ENCODE measurements at regions of chr4 and their contacts with region 1.

Region 1: GRCh38 chr4:120156120-120156718 is 89.6 kb upstream of the MAD2L1 start:
- DNase-seq: no peak
- H3K4me3 Mint-ChIP-seq: no peak overlapping the region
- H3K27ac Mint-ChIP-seq: no peak overlapping the region
- H3K4me1 Mint-ChIP-seq: no peaks in the 10 kb centered on the region
- H3K27me3 Mint-ChIP-seq: no peaks in the 10 kb centered on the region

Region 2: DNA sequence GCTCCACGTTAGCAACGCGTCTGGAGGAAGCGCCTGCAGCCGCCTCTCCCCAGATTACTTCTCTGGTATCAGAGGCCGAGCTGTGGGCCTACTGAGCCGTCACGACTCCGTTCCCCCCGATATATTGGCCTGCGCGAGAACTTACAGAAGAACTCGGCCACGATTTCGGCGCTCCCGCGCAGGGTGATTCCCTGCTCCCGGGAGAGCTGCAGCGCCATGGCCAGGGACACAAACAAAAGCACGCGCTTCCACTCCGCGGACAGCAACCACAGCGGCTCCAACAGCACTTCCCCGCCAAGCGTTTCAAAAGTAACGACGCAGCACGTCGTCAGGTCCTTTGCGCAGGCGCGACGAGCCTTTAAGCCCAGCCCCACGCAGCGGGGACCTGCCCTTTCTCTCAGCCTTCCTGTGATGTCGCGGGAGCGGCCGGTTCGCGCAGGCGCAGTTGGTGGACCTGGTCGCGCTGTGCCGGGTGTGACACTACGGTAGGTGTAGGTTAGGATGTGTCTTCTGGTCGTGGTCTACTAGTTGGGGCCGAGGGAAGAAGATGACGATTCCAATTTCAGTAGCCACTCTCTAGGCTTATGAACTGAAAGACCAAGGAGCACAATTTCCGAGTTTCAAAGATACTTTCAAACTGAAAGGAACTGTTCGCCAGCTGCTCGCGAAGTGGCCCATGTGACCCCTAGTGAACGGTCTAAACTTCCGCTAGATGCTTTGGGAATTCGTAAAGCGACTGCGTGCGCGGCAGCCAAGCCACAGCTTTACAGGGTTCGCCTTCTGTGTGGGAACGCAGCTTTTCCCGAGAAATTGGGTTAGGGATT is 89.5 kb before region 1 on chr4 and contains the start of gene MAD2L1:
- CTCF ChIA-PET with region 1: no interaction called
- POLR2A ChIA-PET with region 1: no interaction called
- intact Hi-C with region 1: loop called (anchors 1 kb)
- DNase-seq: peak; percentile 99
- H3K4me3 Mint-ChIP-seq: peak within 1 kb of the TSS; percentile 98
- H3K27ac Mint-ChIP-seq: peak within 1 kb of the TSS; percentile 99
- H3K4me1 Mint-ChIP-seq: peaks cover 58% of the 10 kb centered on the region
- H3K27me3 Mint-ChIP-seq: no peaks in the 10 kb centered on the region
- total RNA-seq, gene MAD2L1: 92.0 to 96.6 TPM

Region 3: GRCh38 chr4:120517966-120518365 is 361.7 kb after region 1 on chr4:
- CTCF ChIA-PET with region 1: no interaction called
- POLR2A ChIA-PET with region 1: no interaction called
- intact Hi-C with region 1: no loop called
- DNase-seq: no peak
- H3K4me3 Mint-ChIP-seq: no peak overlapping the region
- H3K27ac Mint-ChIP-seq: no peak overlapping the region
- H3K4me1 Mint-ChIP-seq: no peaks in the 10 kb centered on the region
- H3K27me3 Mint-ChIP-seq: no peaks in the 10 kb centered on the region

Region 4: GRCh38 chr4:120633810-120634209 is 477.6 kb after region 1 on chr4:
- CTCF ChIA-PET with region 1: no interaction called
- POLR2A ChIA-PET with region 1: no interaction called
- intact Hi-C with region 1: no loop called
- DNase-seq: no peak
- H3K4me3 Mint-ChIP-seq: no peak overlapping the region
- H3K27ac Mint-ChIP-seq: no peak overlapping the region
- H3K4me1 Mint-ChIP-seq: peaks cover 3% of the 10 kb centered on the region
- H3K27me3 Mint-ChIP-seq: no peaks in the 10 kb centered on the region

Region 5: DNA sequence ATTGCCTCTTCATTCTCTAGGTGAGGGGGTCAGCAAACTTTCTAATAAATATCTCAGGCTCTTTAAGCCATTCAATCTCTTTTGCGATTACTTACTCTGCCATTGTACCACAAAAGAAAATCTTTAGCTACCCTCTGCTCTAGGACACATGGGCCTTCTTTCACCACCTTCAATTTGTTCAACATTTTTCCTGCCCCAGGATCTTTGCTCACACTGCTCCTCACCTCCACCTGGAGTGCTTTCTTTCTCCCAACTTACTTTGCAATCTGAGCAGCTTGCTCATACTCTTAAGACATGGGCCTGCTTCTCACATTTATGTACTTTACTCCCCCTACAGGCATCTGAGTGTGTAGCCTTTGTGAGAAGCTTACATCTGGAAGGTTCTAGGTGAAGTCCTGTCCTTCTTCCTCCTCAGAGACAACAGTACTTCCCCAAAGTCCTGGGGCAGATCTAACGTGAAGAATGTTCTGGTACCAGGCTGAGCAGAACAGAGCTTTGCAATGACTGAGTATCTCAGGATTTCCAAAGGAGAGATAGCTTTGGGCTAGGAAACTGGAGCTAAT is 821.3 kb after region 1 on chr4:
- CTCF ChIA-PET with region 1: interaction called, 7 read pairs
- POLR2A ChIA-PET with region 1: no interaction called
- intact Hi-C with region 1: loop called (anchors 10 kb)
- DNase-seq: no peak
- H3K4me3 Mint-ChIP-seq: no peak overlapping the region
- H3K27ac Mint-ChIP-seq: no peak overlapping the region
- H3K4me1 Mint-ChIP-seq: no peaks in the 10 kb centered on the region
- H3K27me3 Mint-ChIP-seq: no peaks in the 10 kb centered on the region

Region 6: GRCh38 chr4:121096629-121097028 is 940.4 kb after region 1 on chr4:
- CTCF ChIA-PET with region 1: interaction called, 5 read pairs
- POLR2A ChIA-PET with region 1: no interaction called
- intact Hi-C with region 1: loop called (anchors 1 kb)
- DNase-seq: no peak
- H3K4me3 Mint-ChIP-seq: no peak overlapping the region
- H3K27ac Mint-ChIP-seq: no peak overlapping the region
- H3K4me1 Mint-ChIP-seq: no peaks in the 10 kb centered on the region
- H3K27me3 Mint-ChIP-seq: no peaks in the 10 kb centered on the region

Region 7: DNA sequence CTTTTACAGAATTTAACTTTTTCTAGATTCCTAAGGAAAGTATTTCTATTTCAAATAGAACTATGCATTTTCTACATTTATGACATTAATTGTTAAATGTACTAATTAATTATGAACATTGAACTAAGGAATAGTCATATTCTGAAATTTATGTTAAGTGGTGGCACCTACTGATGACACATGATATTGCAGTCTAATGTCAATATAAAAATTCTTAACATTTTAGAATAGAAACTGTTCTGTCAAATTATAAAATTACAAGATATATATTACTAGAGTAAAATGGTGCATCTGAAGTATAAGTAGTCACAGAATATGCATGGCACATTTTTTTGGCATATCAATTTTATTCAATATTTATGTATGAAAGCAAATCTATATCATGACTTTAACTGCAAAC is 956.3 kb after region 1 on chr4:
- CTCF ChIA-PET with region 1: interaction called, 4 read pairs
- POLR2A ChIA-PET with region 1: no interaction called
- intact Hi-C with region 1: loop called (anchors 5 kb)
- DNase-seq: no peak
- H3K4me3 Mint-ChIP-seq: no peak overlapping the region
- H3K27ac Mint-ChIP-seq: no peak overlapping the region
- H3K4me1 Mint-ChIP-seq: peaks cover 12% of the 10 kb centered on the region
- H3K27me3 Mint-ChIP-seq: no peaks in the 10 kb centered on the region

Region 8: DNA sequence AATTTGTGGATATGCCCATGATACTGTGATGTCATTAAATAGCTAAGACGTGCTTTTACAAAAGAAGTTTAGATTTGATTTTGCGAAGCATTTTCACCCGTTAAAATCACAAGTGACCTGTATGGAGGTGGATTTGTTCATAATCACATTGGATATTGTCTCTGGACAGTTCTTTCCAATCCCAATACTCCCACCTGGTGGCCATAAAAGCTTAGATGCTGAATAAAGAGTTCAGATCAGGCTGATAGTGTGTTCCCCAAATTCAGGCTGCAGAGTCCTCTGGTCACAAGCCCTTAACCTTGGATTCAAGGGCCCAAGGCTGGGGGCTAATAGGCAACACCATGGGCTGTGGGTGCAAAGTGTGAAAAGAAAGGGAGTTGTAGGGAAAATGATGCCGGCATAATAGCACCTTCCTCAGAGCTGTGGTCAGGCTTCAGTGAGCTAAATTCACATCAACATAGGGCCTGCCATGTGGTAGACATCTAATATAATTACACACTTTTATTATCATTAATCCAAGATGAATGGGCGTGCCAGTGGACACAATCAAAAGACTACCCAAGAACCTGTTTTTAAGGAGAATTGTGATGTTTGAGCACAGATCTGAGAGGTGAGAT is 1580.6 kb after region 1 on chr4:
- CTCF ChIA-PET with region 1: no interaction called
- POLR2A ChIA-PET with region 1: no interaction called
- intact Hi-C with region 1: loop called (anchors 5 kb)
- DNase-seq: no peak
- H3K4me3 Mint-ChIP-seq: no peak overlapping the region
- H3K27ac Mint-ChIP-seq: no peak overlapping the region
- H3K4me1 Mint-ChIP-seq: no peaks in the 10 kb centered on the region
- H3K27me3 Mint-ChIP-seq: peaks cover 1% of the 10 kb centered on the region

Measured in activated CD4-positive, alpha-beta memory T cell treated with anti-CD3 and anti-CD28 coated beads for 36 hours (primary cell).